ENCODE measurements at regions of chr15 and their contacts with region 1.

Region 1: GRCh38 chr15:29291067-29291845 is 21.6 kb upstream of the NSMCE3 start:
- DNase-seq: no peak
- H3K4me3 ChIP-seq: no peak overlapping the region
- H3K27ac ChIP-seq: no peak overlapping the region
- H3K4me1 ChIP-seq: no peaks in the 10 kb centered on the region
- H3K27me3 ChIP-seq: no peaks in the 10 kb centered on the region
- CTCF ChIP-seq: no peak
- EP300 ChIP-seq: no peak
- POLR2A ChIP-seq: no peak

Region 2: DNA sequence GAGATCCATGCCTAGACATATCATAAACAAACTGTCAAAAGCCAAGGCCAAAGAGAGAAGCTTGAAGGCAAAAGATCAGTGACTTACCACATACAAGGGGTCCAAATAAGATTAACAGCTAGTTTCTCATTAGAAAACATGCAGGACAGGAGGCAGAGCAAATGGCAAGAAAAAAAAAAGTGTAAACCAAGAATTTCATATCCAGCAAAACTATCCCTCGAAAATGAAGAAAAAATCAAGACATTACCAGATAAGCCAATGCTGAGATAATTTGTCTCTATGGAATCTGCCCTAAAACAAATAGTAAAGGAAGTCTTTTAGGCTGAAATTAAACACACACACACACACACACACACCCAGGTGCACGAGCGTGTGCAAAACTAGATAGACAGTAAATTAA is 78.0 kb after region 1 on chr15:
- intact Hi-C with region 1: no loop called
- DNase-seq: no peak
- H3K4me3 ChIP-seq: no peak overlapping the region
- H3K27ac ChIP-seq: no peak overlapping the region
- H3K4me1 ChIP-seq: no peaks in the 10 kb centered on the region
- H3K27me3 ChIP-seq: no peaks in the 10 kb centered on the region
- CTCF ChIP-seq: no peak
- EP300 ChIP-seq: no peak
- POLR2A ChIP-seq: no peak

Region 3: DNA sequence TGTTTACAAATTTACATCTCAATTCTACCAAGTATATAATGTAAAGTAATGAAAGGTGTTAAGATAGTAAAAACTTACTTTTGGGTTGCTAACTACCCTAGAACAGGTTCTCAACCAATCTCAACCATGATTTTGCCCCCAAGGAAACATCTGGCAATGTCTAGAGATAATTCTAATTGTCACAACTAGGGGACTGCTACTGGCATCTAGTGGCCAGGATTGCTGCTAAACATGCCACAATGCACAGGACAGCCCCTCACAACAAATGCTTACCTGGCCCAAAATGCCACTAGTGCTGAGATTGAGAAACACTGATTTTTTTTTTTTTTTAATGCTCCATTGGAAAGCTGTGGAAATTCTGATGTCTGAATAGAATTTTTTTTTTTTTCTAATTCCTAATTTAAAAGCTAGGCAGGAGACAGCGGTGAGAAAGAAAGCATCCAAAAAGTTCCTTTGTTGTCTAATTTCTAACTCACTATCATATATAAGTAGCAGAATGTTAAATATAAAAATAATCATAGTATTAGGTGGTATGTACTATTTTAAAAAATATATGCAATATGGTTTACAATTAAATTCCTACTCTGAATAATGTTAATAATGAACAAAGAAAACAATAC is 449.5 kb after region 1 on chr15:
- intact Hi-C with region 1: loop called in 1 of 4 experiments (anchors 5 kb)
- DNase-seq: no peak
- H3K4me3 ChIP-seq: no peak overlapping the region
- H3K27ac ChIP-seq: no peak overlapping the region
- H3K4me1 ChIP-seq: no peaks in the 10 kb centered on the region
- H3K27me3 ChIP-seq: no peaks in the 10 kb centered on the region
- CTCF ChIP-seq: no peak
- EP300 ChIP-seq: no peak
- POLR2A ChIP-seq: no peak

Measured in ovary (tissue), 10 donors.